Naive thymus-derived CD4-positive, alpha-beta T cell (primary cell): ENCODE measurements at regions of chr10 and their contacts with region 1.

Region 1: DNA sequence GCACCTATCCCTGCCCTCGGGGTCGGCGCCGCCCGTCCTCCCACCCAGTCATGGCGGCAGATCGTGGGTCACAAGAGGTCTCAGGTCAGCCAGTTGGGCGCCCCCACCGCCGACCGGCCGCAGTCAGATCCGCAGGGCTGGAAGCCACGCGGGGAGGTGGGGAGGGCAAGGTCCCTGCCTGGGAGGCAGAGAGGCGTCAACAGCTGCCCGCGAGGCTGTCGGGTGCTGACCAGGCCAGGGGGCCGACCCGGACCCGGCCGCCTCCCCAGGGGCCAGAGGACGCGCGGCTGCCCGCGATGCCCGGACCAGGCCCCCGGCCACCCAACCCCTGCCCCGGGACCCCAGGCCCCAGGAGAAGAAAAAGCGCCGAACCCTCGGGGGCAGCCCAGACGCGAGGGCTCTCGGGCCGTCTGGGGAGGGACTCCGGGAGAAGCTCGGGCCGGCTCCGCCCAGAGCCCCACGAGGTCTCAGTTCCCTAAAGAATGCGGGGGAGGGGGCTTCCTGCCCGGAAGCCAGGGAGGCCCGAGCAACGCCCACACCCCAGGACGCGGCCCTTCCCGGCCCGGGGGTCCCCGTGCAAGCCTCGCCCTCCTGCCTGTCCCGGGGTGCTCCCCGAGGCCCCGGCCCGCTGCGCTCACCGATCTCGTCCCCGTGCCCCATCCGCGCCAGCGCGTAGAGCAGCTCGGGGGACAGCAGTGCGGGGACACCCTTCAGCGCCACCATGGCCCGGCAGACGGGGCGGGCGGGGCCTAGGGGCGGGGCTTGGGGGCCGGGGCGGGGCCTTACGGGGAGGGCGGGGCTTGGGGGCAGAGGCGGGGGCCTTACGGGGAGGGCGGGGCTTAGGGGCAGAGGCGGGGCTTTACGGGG is at the start of gene FUOM:
- DNase-seq: peak; percentile 60 to 88 (median 74)
- ATAC-seq: peak; percentile 95
- H3K4me3 ChIP-seq: peak within 1 kb of the TSS; percentile 61
- H3K4me3 Mint-ChIP-seq: peak within 1 kb of the TSS; percentile 62 to 85 (median 79)
- H3K27ac ChIP-seq: peak within 1 kb of the TSS; percentile 76
- H3K27ac Mint-ChIP-seq: peak within 1 kb of the TSS in 7 of 9 donors; percentile 23 to 72 (median 59)
- H3K4me1 ChIP-seq: no peaks in the 10 kb centered on the region
- H3K4me1 Mint-ChIP-seq: peaks cover 0 to 6% (median 4%) of the 10 kb centered on the region in 7 donors
- H3K27me3 ChIP-seq: no peaks in the 10 kb centered on the region
- H3K27me3 Mint-ChIP-seq: no peaks in the 10 kb centered on the region
- total RNA-seq, gene FUOM: 11.2 to 24.6 (median 16.9) TPM

Region 2: DNA sequence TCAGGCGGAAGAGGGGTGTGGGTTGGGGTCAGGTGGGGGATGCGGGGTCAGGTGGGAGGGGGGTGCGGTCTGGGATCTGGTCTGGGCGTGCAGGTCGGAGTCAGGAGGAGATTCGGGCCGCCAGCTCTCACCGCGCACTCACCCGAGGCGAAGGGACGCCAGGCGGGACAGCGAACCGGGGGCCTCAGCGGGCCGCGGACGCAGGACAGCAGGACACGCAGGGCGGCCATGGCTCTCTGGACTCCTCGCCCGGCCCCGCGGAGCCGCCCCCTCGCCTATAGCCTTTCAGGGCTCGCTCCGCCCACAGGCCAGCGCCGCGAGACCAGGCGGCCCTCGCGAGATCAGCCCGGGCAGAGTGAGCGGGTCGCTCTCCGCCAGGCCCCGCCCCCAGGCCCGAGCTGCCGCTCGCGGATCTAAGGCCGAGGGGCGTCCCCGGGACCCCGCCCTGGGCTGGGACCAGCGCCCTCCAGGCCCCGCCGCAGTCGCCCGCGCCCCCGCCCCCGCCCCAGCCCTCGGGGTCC is 15.6 kb after region 1 on chr10 and contains the start of gene ECHS1:
- CTCF ChIA-PET with region 1: interaction called, 3 read pairs
- POLR2A ChIA-PET with region 1: interaction called, 3 read pairs
- intact Hi-C with region 1: loop called (anchors 1 kb)
- DNase-seq: peak; percentile 81 to 99 (median 90)
- ATAC-seq: peak; percentile 99
- H3K4me3 ChIP-seq: peak within 1 kb of the TSS; percentile 68
- H3K4me3 Mint-ChIP-seq: peak within 1 kb of the TSS; percentile 57 to 92 (median 81)
- H3K27ac ChIP-seq: peak within 1 kb of the TSS; percentile 82
- H3K27ac Mint-ChIP-seq: peak within 1 kb of the TSS; percentile 14 to 83 (median 67)
- H3K4me1 ChIP-seq: peaks cover 0 to 3% of the 10 kb centered on the region in 2 donors
- H3K4me1 Mint-ChIP-seq: peaks cover 0 to 21% (median 12%) of the 10 kb centered on the region in 7 donors
- H3K27me3 ChIP-seq: no peaks in the 10 kb centered on the region
- H3K27me3 Mint-ChIP-seq: peaks cover 0 to 14% (median 0%) of the 10 kb centered on the region in 5 donors
- total RNA-seq, gene ECHS1: 17.5 to 39.8 (median 28.9) TPM

Region 3: DNA sequence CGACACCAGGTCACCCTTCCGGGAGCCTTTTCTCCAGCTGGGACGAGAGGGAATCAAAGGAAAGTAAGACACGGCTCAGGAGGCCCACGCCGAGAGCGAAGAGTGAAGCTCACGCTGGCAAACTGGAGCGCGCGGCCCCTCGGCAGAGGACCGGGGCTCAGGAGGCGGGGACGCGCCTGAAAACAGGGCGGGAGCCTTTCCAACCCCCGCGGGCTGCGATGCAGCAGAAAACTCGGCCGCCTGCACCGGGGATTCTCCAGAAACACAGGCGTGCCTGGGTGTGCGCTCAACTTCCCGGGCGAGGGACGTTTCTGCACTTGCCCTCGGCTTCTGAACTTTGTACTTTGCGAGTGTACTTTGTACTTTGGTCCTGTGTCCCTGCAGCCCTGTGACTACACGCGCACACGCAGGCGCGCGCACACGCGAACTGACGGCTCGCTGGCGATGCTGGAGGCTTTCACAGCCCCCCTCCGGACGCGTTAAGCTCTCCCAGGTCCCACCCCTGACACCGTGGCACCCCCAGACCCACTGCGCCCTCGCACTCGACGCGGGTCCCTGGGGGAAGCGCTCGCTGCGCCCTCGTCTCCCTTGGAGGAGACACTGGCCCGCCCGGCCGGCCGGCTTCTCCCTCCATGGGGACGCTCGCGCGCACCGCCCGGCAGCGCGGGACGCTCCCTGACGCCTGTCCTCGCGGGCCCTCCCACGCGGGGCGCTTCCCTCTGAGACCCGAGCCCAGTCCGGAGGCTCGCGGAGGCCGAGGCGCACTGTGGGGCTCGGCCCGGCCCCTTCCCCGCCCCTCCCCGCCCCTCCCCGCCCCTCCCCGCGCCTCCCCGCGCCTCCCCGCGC is 21.0 kb after region 1 on chr10:
- CTCF ChIA-PET with region 1: no interaction called
- POLR2A ChIA-PET with region 1: interaction called, 3 read pairs
- intact Hi-C with region 1: loop called (anchors 1 kb)
- DNase-seq: peak in 8 of 9 donors; percentile 51 to 78 (median 59)
- ATAC-seq: peak; percentile 73
- H3K4me3 ChIP-seq: peak overlapping the region; percentile 92
- H3K4me3 Mint-ChIP-seq: peak overlapping the region; percentile 82 to 90 (median 86)
- H3K27ac ChIP-seq: peak overlapping the region; percentile 69
- H3K27ac Mint-ChIP-seq: peak overlapping the region in 5 of 9 donors; percentile 33 to 84 (median 75)
- H3K4me1 ChIP-seq: peaks cover 0 to 3% of the 10 kb centered on the region in 2 donors
- H3K4me1 Mint-ChIP-seq: peaks cover 0 to 18% (median 10%) of the 10 kb centered on the region in 7 donors
- H3K27me3 ChIP-seq: no peaks in the 10 kb centered on the region
- H3K27me3 Mint-ChIP-seq: peaks cover 0 to 14% (median 0%) of the 10 kb centered on the region in 5 donors